Posterior vena cava (tissue), 2 donors: ENCODE measurements at regions of chr4 and their contacts with region 1.

Region 1: GRCh38 chr4:125244848-125245450 is 69.8 kb upstream of the FAT4 start:
- DNase-seq: no peak

Region 2: DNA sequence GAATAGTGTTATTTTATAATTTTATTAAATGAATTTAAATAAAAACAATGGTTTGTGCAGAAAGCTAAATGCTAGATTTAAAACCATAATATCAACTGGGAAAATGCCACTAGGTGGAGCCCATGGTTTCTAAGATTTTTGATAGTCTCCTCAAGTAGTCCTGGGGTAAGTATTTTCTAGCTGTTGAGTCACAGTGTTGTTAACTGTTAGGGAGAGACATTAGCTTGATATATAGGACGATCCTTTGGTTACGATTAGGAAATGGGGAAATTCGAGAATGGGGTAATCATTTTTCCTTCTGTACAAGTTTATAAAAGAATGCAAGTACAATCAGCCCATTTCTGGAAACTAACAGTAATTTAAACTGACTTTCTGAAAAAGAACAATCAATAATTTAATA is 910.8 kb before region 1 on chr4:
- intact Hi-C with region 1: loop called (anchors 10 kb)
- DNase-seq: no peak

Region 3: GRCh38 chr4:125357675-125358074 is 112.7 kb after region 1 on chr4:
- intact Hi-C with region 1: no loop called
- DNase-seq: no peak